ENCODE measurements at regions of chr1 and their contacts with region 1.

Region 1: DNA sequence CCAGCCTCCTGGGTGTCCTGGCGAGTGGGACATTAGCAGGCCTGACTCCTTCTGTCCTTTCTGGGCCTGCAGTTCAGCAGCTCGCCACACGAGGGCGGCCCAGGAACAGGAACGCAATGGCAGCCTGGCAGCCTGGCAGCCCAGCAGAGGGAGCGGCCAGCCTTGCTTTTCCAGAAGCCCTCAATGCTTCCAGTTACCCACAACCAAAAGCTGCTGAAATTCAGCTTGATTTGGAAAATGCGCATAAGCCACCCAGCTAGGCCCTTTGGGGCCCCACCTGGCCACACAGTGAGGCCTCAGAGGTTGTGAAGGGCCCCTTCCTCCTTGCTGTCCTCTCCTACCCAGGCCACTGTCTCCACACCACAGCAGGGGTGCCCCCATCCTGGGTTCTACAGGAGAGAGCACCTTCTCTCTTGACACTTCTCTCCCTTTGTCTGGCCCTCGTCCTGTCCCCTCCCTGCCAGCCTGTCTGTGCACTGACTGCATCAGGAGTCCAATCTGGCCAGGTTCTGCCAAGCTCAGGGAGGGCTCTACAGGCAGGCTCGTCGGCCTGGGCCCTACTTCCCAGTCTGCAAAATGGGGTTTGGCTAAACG is 103.4 kb upstream of the VAMP3 start:
- DNase-seq: peak; percentile 96
- ATAC-seq: peak; percentile 60
- H3K4me3 Mint-ChIP-seq: no peak overlapping the region
- H3K27ac Mint-ChIP-seq: no peak overlapping the region
- H3K4me1 Mint-ChIP-seq: peaks cover 19% of the 10 kb centered on the region
- H3K27me3 Mint-ChIP-seq: no peaks in the 10 kb centered on the region; the same call in 1 of the 2 replicates
- CTCF ChIP-seq: peak; percentile 99

Region 2: DNA sequence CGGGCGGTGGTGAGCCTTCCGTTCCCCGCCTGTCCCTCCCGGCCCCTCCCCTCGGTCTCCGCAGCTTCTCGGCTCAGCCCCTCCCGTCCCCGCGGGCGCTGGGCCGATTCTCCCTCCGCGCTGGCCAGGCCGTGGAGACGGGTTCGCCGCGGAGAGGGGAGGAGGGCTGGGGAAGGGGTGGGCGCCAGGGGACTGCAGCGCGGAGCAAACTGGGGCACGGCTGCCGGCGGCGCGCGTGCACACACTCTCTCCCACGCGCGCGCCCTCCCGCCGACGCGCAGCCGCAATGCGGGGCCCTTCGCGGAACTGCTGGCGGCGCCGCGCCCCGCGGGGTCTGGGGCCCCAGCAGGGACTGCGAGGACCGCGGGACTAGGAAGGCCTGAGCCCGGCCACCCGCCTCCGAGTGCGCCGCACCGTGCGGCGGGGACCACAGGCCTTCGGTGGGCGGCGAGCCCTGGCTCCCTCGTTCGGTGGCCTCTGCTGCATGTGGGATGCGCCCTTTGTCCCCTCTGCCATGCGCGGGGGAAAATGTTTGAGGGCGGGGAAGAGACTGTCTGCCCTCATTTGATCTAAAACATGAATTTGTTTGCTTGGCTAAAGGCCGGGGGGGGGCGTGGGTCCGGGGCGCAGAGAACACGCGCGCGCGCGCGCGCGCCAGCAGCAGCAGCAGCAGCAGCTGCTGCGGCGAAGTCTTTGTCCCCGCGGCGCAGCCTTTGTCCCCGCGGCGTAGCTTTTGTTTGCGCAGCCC is 12.7 kb after region 1 on chr1:
- CTCF ChIA-PET with region 1: interaction called, 133 read pairs
- POLR2A ChIA-PET with region 1: interaction called, 3 read pairs
- DNase-seq: peak; percentile 50
- ATAC-seq: peak; percentile 62
- H3K4me3 Mint-ChIP-seq: peak overlapping the region; percentile 63
- H3K27ac Mint-ChIP-seq: no peak overlapping the region
- H3K4me1 Mint-ChIP-seq: no peaks in the 10 kb centered on the region
- H3K27me3 Mint-ChIP-seq: peaks cover 22% of the 10 kb centered on the region
- CTCF ChIP-seq: no peak

Region 3: DNA sequence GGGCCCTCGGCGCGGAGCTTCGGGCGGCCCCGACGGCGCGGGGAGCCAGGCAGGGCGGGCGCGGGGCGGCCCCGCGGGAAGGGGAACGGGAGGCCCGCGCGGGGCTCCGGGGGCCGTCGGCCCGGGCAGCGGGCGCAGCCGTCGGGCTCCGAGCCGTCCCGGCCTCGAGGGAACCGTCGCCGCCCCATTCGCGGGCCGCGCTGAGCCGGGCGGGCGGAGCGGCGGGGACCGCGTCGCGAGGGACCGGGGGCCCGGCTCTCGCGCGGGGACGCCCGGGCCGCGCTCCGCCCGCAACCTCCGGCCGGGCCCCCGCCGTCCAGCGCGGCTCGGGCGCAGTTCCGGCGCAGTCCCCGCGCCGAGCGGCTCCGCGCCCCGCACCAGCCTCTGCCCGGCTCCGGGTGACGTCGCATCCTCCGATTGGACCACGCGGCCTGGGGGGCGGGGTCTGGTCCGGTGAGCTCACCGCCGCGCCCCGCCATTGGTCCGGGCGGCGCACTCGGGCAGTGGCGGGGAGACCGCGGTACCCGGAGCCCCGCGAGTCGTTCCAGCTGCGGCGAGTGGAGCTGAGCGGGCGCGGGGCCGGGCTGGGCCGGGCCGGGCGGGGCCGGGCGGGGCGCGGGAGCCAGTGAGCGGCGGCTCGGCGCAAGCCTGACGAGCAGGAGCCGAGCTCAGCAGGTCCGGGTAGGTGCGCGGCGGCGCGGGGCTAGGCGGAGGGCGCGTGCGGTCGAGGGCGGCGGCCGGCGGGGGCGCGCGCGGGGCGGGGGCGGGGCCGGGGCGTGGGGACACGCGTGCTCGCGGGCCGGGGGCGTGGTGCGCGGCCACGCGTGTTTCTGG is 36.7 kb after region 1 on chr1:
- CTCF ChIA-PET with region 1: interaction called, 84 read pairs
- POLR2A ChIA-PET with region 1: interaction called, 3 read pairs
- DNase-seq: peak; percentile 95
- ATAC-seq: peak; percentile 88
- H3K4me3 Mint-ChIP-seq: peak overlapping the region; percentile 70; the same call in 1 of the 2 replicates
- H3K27ac Mint-ChIP-seq: no peak overlapping the region
- H3K4me1 Mint-ChIP-seq: peaks cover 16% of the 10 kb centered on the region
- H3K27me3 Mint-ChIP-seq: peaks cover 54% of the 10 kb centered on the region
- CTCF ChIP-seq: no peak

Region 4: DNA sequence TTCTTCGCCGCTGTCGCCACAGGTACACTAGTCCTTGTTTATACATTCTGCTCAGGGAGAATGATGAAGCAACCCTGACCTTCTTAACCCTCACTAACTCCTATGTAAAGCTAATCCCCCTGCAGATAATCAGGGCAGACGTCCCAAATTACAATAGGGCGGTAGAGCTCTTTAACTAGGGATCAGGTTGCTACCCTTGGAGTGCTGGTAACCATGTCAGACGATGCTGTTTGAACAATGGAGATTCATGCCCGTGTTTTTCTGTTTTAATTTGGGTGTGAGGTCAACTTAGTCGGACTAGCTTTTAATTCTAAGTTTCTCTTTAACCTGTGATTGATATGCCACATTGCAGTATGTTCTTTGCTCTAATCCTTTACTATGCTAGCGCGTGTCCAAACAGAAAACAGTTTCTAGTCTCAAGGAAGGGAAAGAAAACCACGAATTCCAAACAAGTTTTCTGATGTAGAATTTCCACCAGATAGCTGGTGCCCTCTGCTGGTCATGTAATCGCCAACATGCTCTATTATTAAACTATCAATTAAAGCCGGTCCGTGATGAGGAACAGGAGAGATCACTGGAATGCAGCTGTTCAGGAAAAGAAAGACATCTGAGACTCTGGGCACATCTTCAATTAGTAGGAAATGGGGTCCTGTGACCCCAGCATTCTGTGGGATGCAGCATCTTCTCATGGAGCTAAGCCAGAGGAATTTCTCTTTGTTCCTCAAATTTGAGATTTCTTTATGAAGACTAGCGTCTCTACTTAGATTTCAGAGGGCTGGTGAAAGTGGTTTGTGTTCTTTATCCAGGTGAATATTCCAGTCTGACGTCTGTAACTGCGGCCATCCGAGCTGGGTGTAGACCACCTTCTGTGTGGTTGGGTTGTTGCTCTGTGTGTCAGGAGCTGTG is 85.0 kb after region 1 on chr1:
- CTCF ChIA-PET with region 1: interaction called, 502 read pairs
- POLR2A ChIA-PET with region 1: interaction called, 7 read pairs
- DNase-seq: peak; percentile 51
- ATAC-seq: peak; percentile 88
- H3K4me3 Mint-ChIP-seq: peak overlapping the region; percentile 60
- H3K27ac Mint-ChIP-seq: peak overlapping the region; percentile 86
- H3K4me1 Mint-ChIP-seq: peaks cover 27% of the 10 kb centered on the region
- H3K27me3 Mint-ChIP-seq: no peaks in the 10 kb centered on the region
- CTCF ChIP-seq: peak; percentile 37

Region 5: GRCh38 chr1:7770997-7771822 is 103.5 kb after region 1 on chr1 and contains the start of gene VAMP3:
- CTCF ChIA-PET with region 1: interaction called, 24 read pairs
- POLR2A ChIA-PET with region 1: interaction called, 3 read pairs
- DNase-seq: peak; percentile 88
- ATAC-seq: peak; percentile 95
- H3K4me3 Mint-ChIP-seq: peak within 1 kb of the TSS; percentile 86
- H3K27ac Mint-ChIP-seq: peak within 1 kb of the TSS; percentile 79
- H3K4me1 Mint-ChIP-seq: peaks cover 15% of the 10 kb centered on the region
- H3K27me3 Mint-ChIP-seq: no peaks in the 10 kb centered on the region
- CTCF ChIP-seq: no peak
- total RNA-seq, gene VAMP3: 34.7 to 50.2 TPM (median 40.2 TPM) in 3 replicates

Region 6: DNA sequence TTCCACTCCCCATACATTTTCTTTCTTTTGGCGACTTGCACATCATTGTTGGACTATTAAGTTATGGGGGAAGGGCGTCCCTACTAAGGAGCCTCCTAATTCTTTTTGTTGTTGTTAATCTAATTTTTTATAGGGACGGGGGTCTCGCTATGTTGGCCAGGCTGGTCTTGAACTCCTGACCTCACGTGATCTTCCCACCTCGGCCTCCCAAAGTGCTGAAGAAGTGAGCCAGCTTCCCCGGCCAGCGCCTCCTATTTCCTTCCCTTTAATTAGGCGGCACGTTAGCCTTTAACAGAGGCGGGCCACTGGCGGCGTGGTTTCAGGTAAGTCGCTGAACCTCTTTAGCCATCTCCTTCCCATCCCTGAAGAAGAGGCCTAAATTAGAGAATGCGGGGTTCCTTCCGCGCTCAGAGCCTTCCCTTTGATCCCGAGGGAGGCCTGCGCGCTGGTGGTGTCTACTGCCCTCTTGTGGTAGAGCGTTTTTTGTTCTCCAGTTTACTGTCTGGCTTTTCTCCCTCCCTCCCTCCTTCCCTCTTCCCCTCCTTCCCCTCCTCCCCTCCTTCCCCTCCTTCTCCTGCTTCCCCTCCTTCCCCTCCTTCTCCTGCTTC is 234.9 kb after region 1 on chr1:
- CTCF ChIA-PET with region 1: interaction called, 10 read pairs
- POLR2A ChIA-PET with region 1: no interaction called
- DNase-seq: peak; percentile 79
- ATAC-seq: peak; percentile 96
- H3K4me3 Mint-ChIP-seq: peak overlapping the region; percentile 44
- H3K27ac Mint-ChIP-seq: no peak overlapping the region
- H3K4me1 Mint-ChIP-seq: no peaks in the 10 kb centered on the region
- H3K27me3 Mint-ChIP-seq: no peaks in the 10 kb centered on the region
- CTCF ChIP-seq: peak; percentile 62